ENCODE measurements at regions of chr2 and their contacts with region 1.

Region 1: GRCh38 chr2:135800513-135801460 is 36.2 kb downstream of the LCT start:
- DNase-seq: no peak
- H3K4me3 ChIP-seq: no peak overlapping the region
- H3K27ac ChIP-seq: no peak overlapping the region
- H3K4me1 ChIP-seq: no peaks in the 10 kb centered on the region
- H3K27me3 ChIP-seq: no peaks in the 10 kb centered on the region
- CTCF ChIP-seq: no peak
- POLR2A ChIP-seq: no peak

Region 2: DNA sequence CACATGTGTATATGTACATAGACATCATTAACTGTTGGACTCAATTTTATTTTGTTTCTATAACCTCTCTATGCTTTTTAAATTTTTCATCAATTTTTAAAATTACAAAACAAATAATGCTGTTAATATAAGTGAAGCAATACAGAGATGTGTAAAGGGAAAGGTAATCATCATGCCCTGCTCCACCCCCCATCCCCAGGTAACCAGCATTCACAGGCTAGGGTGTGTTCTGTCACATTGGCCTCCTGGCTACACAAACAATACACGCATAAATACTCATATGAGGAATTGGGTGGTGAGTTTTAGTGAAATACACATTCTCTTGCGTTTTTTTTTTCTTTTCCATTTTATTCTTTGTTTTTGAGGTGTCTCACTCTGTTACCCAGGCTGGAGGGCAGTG is 116.4 kb before region 1 on chr2:
- intact Hi-C with region 1: loop called (anchors 5 kb)
- DNase-seq: no peak
- H3K4me3 ChIP-seq: no peak overlapping the region
- H3K27ac ChIP-seq: no peak overlapping the region
- H3K4me1 ChIP-seq: no peaks in the 10 kb centered on the region
- H3K27me3 ChIP-seq: no peaks in the 10 kb centered on the region
- CTCF ChIP-seq: no peak
- POLR2A ChIP-seq: no peak